Upper lobe of right lung (tissue), 1 donor: ENCODE measurements at regions of chr10 and their contacts with region 1.

Region 1: DNA sequence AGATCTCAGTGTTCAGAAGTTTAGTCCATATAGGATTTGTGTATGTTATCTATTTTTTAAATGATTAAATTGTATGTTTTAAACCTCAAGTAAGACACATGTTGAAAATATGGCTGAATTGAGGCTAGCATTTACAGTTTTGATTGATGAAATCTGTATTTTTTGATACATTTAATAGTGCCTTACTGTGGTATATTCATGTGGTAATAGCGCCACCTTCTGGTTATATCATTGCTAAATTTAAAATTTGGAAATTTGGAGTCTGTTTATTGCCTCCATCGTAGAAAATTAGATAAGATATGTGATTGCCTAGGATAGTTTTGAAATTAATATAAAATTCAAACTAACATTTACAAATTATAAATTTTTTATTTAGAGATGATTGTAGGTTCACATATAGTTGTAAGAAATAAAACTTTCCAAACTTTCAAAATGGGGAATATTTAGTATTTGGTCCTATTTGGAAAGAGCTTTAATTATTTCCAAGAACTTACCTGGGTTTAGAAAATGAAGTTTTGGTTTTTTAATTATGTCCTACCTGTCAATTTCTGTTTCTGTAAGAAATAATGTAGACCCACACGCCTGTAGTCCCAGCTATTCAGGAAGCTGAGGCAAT is 19.1 kb upstream of the ARMS2 start:
- DNase-seq: no peak
- ATAC-seq: peak; percentile 57
- H3K4me3 ChIP-seq: no peak overlapping the region
- H3K27ac ChIP-seq: no peak overlapping the region
- H3K4me1 ChIP-seq: no peaks in the 10 kb centered on the region
- H3K27me3 ChIP-seq: no peaks in the 10 kb centered on the region
- CTCF ChIP-seq: peak; percentile 65

Region 2: GRCh38 chr10:122298598-122299301 is 136.6 kb before region 1 on chr10:
- intact Hi-C with region 1: loop called (anchors 10 kb)
- DNase-seq: peak; percentile 76
- ATAC-seq: peak; percentile 88
- H3K4me3 ChIP-seq: no peak overlapping the region
- H3K27ac ChIP-seq: no peak overlapping the region
- H3K4me1 ChIP-seq: peaks cover 4% of the 10 kb centered on the region
- H3K27me3 ChIP-seq: no peaks in the 10 kb centered on the region
- CTCF ChIP-seq: peak; percentile 93

Region 3: GRCh38 chr10:122565728-122566206 is 130.4 kb after region 1 on chr10:
- intact Hi-C with region 1: loop called (anchors 10 kb)
- DNase-seq: peak; percentile 81
- ATAC-seq: peak; percentile 77
- H3K4me3 ChIP-seq: no peak overlapping the region
- H3K27ac ChIP-seq: no peak overlapping the region
- H3K4me1 ChIP-seq: no peaks in the 10 kb centered on the region
- H3K27me3 ChIP-seq: peaks cover 5% of the 10 kb centered on the region
- CTCF ChIP-seq: peak; percentile 85